Activated B cell treated with CpG ODN at 0.5 μM for 24 hours (primary cell): ENCODE measurements at regions of chr20 and their contacts with region 1.

Region 1: DNA sequence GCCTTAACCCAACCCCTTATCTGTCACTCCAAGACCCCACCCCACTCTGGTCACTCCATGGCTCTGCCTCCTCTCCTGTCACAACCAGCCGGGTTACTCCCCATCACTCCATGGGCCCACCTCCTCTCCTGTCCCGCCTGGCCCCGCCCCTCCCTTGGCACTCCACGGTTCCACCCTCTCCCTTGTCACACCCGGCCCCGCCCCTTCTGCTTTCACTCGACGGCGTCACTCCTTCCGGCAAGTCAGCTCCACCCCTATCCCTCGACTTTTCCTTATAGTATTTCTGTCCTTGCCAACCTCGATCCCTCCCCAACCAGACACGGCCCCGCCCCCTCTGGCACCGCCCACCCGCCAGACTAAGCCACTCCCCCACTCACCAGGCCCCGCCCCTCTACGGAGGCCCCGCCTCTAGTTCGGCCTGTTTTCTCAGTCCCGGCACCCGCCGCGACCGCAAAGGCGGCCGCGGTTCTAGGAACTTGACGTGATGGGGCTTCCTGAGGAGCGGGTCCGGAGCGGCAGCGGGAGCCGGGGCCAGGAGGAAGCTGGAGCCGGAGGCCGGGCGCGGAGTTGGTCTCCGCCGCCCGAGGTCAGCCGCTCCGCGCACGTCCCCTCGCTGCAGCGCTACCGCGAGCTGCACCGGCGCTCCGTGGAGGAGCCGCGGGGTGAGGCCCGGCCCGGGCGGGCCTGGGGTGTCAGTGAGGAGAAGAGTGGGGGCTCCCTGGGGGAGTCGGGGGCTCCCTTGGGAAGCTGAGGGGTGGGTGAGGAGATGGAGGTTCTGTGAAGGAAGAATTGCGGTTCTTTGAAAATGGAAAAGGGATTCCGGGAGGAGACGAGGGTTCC is at the start of gene ACSS2:
- DNase-seq: peak; percentile 96
- ATAC-seq: peak; percentile 86
- H3K4me3 Mint-ChIP-seq: peak within 1 kb of the TSS; percentile 86
- H3K27ac Mint-ChIP-seq: peak within 1 kb of the TSS; percentile 25
- H3K4me1 Mint-ChIP-seq: peaks cover 51% of the 10 kb centered on the region
- H3K27me3 Mint-ChIP-seq: no peaks in the 10 kb centered on the region
- CTCF ChIP-seq: no peak
- total RNA-seq, gene ACSS2: 8.4 and 11.3 TPM in 2 replicates

Region 2: DNA sequence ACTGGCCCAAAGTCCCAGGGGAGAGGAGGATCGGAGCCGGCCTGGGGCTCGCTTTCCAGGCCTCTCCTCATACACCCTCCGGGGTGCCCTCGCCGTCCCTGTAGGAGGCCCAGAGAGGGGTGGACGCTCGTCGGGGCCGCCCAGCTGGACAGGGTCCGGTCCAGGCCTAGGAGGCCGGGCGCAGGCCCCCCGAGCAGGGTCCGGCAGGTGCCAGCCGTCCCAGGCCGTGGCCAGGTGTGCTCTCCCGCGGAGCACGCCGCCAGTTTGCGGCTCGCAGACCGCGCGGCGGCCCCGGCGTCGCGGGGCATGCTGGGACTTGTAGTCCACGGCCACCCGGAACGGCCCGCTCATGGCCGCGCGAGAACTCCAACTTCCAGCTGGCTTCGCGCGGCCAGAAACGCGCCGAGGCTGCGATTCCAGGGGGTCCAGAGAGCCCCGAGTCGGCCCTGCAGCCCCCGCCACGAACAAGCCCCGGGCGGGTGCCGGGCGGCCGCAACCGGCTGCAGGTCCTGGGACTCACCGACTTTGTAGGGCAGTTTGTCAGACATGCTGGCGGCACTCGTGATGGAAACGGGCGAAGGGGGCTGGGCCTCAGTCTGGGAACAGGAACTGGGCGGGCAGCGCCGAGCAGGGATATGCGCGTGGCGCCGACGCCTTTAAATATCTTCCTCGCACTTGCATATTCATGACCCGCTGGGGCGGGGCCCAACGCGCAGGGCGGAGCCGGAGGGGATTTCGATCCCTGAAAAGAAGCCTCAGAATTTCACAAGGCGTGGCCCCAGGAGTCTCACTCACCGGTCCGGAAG is 573.5 kb before region 1 on chr20 and contains the start of gene AHCY:
- CTCF ChIA-PET with region 1: no interaction called
- POLR2A ChIA-PET with region 1: no interaction called
- intact Hi-C with region 1: loop called (anchors 2 kb)
- DNase-seq: peak; percentile 90
- ATAC-seq: peak; percentile 91
- H3K4me3 Mint-ChIP-seq: peak within 1 kb of the TSS; percentile 94
- H3K27ac Mint-ChIP-seq: peak within 1 kb of the TSS; percentile 93
- H3K4me1 Mint-ChIP-seq: peaks cover 22% of the 10 kb centered on the region
- H3K27me3 Mint-ChIP-seq: no peaks in the 10 kb centered on the region
- CTCF ChIP-seq: no peak
- total RNA-seq, gene AHCY: 77.9 and 83.5 TPM in 2 replicates

Region 3: GRCh38 chr20:34815636-34816035 is 60.7 kb before region 1 on chr20:
- CTCF ChIA-PET with region 1: no interaction called
- POLR2A ChIA-PET with region 1: no interaction called
- intact Hi-C with region 1: no loop called
- DNase-seq: no peak
- ATAC-seq: no peak
- H3K4me3 Mint-ChIP-seq: no peak overlapping the region
- H3K27ac Mint-ChIP-seq: no peak overlapping the region
- H3K4me1 Mint-ChIP-seq: peaks cover 27% of the 10 kb centered on the region
- H3K27me3 Mint-ChIP-seq: no peaks in the 10 kb centered on the region
- CTCF ChIP-seq: no peak

Region 4: GRCh38 chr20:34825530-34826362 is 50.6 kb before region 1 on chr20 and contains the start of gene NCOA6:
- CTCF ChIA-PET with region 1: interaction called, 3 read pairs
- POLR2A ChIA-PET with region 1: no interaction called
- intact Hi-C with region 1: loop called (anchors 1 kb)
- DNase-seq: peak; percentile 78
- ATAC-seq: peak; percentile 74
- H3K4me3 Mint-ChIP-seq: peak within 1 kb of the TSS; percentile 97
- H3K27ac Mint-ChIP-seq: peak within 1 kb of the TSS; percentile 90
- H3K4me1 Mint-ChIP-seq: peaks cover 41% of the 10 kb centered on the region
- H3K27me3 Mint-ChIP-seq: no peaks in the 10 kb centered on the region
- CTCF ChIP-seq: no peak
- total RNA-seq, gene NCOA6: 23.7 and 24.0 TPM in 2 replicates

Region 5: DNA sequence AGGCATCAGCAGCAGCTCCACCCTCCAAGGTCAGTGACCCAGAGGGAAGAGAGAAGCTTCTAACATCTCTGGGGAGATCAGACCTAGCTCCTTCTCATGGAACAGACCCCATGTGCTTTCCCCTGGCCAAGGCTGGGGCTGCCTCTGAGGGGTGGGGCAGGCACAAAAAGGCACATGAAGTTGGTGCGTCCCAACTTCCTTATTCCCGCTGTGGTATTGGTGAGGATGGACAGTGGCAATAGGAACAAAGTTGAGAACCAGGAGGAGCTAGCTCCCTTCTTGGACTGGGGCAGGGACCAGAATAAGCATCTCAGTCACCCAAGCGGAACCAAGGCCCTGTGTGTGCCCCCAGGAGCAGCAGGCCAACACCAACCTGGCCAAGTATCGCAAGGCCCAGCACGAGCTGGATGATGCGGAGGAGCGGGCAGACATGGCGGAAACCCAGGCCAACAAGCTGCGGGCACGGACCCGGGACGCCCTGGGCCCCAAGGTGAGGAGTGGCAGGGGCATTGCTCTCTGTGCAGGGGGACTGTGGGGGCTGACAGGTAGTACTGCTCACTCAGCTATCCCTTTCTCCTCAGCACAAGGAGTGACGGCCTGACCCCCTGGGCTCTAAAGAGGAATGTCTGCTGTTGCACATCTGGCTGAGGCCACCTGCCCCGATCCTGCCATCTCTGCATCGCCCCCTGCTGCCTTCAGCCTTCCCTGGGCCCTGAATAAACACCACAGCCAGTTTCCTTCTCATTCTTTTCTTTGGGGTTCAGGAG is 125.4 kb after region 1 on chr20:
- CTCF ChIA-PET with region 1: interaction called, 4 read pairs
- POLR2A ChIA-PET with region 1: no interaction called
- intact Hi-C with region 1: loop called (anchors 5 kb)
- DNase-seq: no peak
- ATAC-seq: no peak
- H3K4me3 Mint-ChIP-seq: no peak overlapping the region
- H3K27ac Mint-ChIP-seq: no peak overlapping the region
- H3K4me1 Mint-ChIP-seq: peaks cover 3% of the 10 kb centered on the region
- H3K27me3 Mint-ChIP-seq: no peaks in the 10 kb centered on the region
- CTCF ChIP-seq: no peak

Region 6: GRCh38 chr20:35207950-35208611 is 331.7 kb after region 1 on chr20:
- CTCF ChIA-PET with region 1: interaction called, 6 read pairs
- POLR2A ChIA-PET with region 1: no interaction called
- intact Hi-C with region 1: loop called (anchors 1 kb)
- DNase-seq: peak; percentile 42
- ATAC-seq: peak; percentile 85
- H3K4me3 Mint-ChIP-seq: no peak overlapping the region
- H3K27ac Mint-ChIP-seq: no peak overlapping the region
- H3K4me1 Mint-ChIP-seq: no peaks in the 10 kb centered on the region
- H3K27me3 Mint-ChIP-seq: no peaks in the 10 kb centered on the region
- CTCF ChIP-seq: no peak

Region 7: GRCh38 chr20:35541783-35542588 is 665.6 kb after region 1 on chr20 and contains the start of gene ERGIC3:
- CTCF ChIA-PET with region 1: no interaction called
- POLR2A ChIA-PET with region 1: no interaction called
- intact Hi-C with region 1: loop called (anchors 5 kb)
- DNase-seq: peak; percentile 97
- ATAC-seq: peak; percentile 92
- H3K4me3 Mint-ChIP-seq: peak within 1 kb of the TSS; percentile 92
- H3K27ac Mint-ChIP-seq: peak within 1 kb of the TSS; percentile 77
- H3K4me1 Mint-ChIP-seq: peaks cover 21% of the 10 kb centered on the region
- H3K27me3 Mint-ChIP-seq: no peaks in the 10 kb centered on the region
- CTCF ChIP-seq: no peak
- total RNA-seq, gene ERGIC3: 159 and 183 TPM in 2 replicates